ENCODE measurements at regions of chr17 and their contacts with region 1.

Region 1: GRCh38 chr17:45098869-45099616 is 33.3 kb downstream of the PLCD3 start:
- DNase-seq: peak; percentile 79
- H3K4me3 Mint-ChIP-seq: no peak overlapping the region
- H3K27ac Mint-ChIP-seq: no peak overlapping the region
- H3K4me1 Mint-ChIP-seq: no peaks in the 10 kb centered on the region
- H3K27me3 Mint-ChIP-seq: no peaks in the 10 kb centered on the region

Region 2: DNA sequence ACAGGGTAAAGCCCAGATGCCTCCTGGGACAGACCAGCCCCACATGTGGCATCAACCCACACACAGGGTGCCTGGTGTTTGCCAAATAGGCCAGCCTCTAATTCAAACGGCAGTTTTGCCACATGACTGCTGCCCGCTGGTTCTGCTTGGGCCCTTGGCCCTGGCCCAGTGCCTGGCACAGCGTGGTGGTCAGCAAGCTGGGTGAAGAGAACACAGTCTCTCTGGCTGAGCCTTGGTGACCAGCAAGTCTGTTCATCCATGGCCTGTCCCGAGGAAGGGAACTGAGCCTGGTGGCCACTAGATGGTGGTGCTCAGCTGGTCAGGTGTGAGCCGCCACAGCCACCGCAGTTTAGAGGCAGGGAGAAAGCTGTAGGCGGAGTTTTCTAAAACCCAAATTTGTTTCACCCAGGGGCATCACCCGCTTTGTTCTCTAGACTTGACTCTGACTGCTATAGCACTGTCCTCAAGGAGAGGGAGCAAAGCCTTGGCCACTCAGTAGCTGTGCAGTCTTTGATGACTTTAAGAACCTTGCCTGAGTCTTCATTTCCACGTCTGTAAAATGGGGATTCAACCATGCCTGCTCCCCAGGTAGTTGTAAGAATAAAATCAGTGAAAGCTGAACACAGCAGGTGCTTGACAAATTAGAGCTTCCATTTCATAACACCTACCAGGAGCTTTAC is 179.0 kb before region 1 on chr17:
- CTCF ChIA-PET with region 1: interaction called, 10 read pairs
- POLR2A ChIA-PET with region 1: interaction called, 3 read pairs
- DNase-seq: peak; percentile 69
- H3K4me3 Mint-ChIP-seq: no peak overlapping the region
- H3K27ac Mint-ChIP-seq: no peak overlapping the region
- H3K4me1 Mint-ChIP-seq: no peaks in the 10 kb centered on the region
- H3K27me3 Mint-ChIP-seq: peaks cover 26% of the 10 kb centered on the region

Region 3: DNA sequence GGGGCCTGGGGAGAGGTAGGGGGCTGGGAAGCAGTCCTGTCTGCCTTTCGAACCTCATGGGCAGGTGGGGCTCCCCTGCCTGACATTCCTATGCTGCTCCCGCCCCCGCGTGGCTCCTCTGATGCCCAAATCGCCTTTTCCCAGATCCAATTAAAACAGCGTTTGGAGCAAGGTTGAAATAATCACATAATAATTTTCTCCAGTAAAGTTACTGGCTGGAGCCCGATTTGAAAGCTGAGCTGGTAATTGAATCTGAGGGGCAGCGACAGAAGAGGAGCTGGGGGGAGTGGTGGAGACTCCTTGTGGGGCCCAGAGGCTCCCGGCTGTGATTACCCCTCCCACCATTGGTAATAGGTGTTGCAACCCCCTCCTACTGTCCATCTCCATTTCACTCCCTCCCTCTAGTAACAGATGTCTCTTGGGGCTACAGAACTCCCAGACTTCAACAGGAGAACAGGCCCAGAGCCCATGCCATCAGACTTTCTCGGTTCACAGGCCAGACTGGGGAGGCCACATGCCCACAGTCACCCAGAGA is 92.0 kb before region 1 on chr17:
- CTCF ChIA-PET with region 1: no interaction called
- POLR2A ChIA-PET with region 1: no interaction called
- DNase-seq: no peak
- H3K4me3 Mint-ChIP-seq: no peak overlapping the region
- H3K27ac Mint-ChIP-seq: no peak overlapping the region
- H3K4me1 Mint-ChIP-seq: peaks cover 7% of the 10 kb centered on the region
- H3K27me3 Mint-ChIP-seq: peaks cover 15% of the 10 kb centered on the region

Region 4: DNA sequence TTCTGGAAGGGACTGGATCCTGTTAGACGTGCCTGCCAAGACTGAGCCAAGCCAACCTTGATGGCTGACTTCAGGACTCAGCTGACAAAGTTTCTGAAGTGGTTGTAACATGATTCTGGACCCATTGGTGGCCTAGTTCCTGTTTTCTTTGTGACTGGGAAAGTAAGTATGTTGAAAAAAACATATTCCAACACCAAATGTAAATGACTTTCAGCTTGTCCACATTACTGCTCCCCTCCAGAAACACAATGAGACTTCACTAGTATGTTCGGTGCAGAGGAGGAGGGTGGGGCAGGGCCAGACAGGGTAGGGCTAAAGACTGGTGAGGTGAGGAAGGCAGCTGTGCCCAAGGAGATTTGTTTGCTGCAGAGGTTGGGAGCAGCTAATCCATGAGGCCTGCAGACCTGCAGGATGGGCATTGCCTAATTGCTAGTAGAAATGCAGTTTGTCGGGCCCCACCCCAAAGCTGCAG is 11.5 kb before region 1 on chr17:
- CTCF ChIA-PET with region 1: interaction called, 26 read pairs
- POLR2A ChIA-PET with region 1: no interaction called
- DNase-seq: no peak
- H3K4me3 Mint-ChIP-seq: no peak overlapping the region
- H3K27ac Mint-ChIP-seq: no peak overlapping the region
- H3K4me1 Mint-ChIP-seq: peaks cover 7% of the 10 kb centered on the region
- H3K27me3 Mint-ChIP-seq: no peaks in the 10 kb centered on the region

Region 5: DNA sequence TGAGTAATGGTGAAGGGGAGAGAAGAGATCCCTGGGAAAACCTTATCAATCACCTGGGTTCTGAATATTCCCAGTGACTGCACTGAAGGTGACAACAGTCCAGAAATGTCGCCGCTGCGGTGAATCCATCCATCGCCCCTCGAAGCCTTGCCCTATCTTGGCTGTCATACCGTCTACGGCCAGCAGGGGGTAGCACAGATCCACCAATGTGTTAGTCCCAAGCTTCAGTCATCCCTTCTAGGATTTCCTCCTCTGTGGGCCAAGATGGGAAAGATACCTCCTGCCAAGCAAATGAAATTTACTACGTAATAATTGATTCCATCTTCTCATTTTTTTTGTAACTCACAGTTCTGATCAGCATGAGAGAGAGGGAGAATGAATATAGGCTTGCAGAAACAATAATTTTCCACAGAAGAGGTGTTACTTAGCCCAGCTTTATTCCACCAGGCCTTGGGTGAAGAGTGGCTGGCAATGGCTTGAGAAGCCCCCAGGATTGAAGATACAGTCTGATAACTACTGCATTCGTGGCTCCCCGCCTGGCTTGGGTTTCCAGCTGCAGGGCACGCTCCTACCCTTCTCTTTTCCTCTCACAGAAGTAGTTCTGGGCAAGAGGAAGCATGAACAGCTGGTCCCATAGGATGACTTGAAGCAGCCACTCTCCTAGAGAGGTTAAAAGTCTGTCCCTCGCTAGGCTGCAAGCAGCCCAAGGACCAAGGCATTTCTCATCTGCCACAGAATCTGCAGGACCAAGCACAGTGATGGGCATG is 120.0 kb after region 1 on chr17:
- CTCF ChIA-PET with region 1: no interaction called
- POLR2A ChIA-PET with region 1: no interaction called
- DNase-seq: peak; percentile 86
- H3K4me3 Mint-ChIP-seq: peak overlapping the region; percentile 85
- H3K27ac Mint-ChIP-seq: peak overlapping the region; percentile 75
- H3K4me1 Mint-ChIP-seq: peaks cover 30% of the 10 kb centered on the region
- H3K27me3 Mint-ChIP-seq: no peaks in the 10 kb centered on the region

Measured in activated CD4-positive, alpha-beta memory T cell treated with anti-CD3 and anti-CD28 coated beads, Interleukin-2, amount 10 ng/mL, durations not matched to agents 7 days and 5 days (primary cell).